ENCODE measurements at regions of chr7 and their contacts with region 1.

Region 1: GRCh38 chr7:43700059-43700501 is 29.2 kb downstream of the COA1 start:
- DNase-seq: peak in 7 of 9 donors; percentile 38 to 73 (median 67)
- ATAC-seq: peak; percentile 89
- H3K4me3 ChIP-seq: no peak overlapping the region
- H3K4me3 Mint-ChIP-seq: peak overlapping the region in 9 of 10 donors; percentile 3 to 75 (median 64)
- H3K27ac ChIP-seq: peak overlapping the region; percentile 32
- H3K27ac Mint-ChIP-seq: peak overlapping the region in 8 of 9 donors; percentile 49 to 81 (median 70)
- H3K4me1 ChIP-seq: peaks cover 12 to 30% of the 10 kb centered on the region in 2 donors
- H3K4me1 Mint-ChIP-seq: peaks cover 23 to 56% (median 44%) of the 10 kb centered on the region in 7 donors
- H3K27me3 ChIP-seq: no peaks in the 10 kb centered on the region
- H3K27me3 Mint-ChIP-seq: no peaks in the 10 kb centered on the region

Region 2: DNA sequence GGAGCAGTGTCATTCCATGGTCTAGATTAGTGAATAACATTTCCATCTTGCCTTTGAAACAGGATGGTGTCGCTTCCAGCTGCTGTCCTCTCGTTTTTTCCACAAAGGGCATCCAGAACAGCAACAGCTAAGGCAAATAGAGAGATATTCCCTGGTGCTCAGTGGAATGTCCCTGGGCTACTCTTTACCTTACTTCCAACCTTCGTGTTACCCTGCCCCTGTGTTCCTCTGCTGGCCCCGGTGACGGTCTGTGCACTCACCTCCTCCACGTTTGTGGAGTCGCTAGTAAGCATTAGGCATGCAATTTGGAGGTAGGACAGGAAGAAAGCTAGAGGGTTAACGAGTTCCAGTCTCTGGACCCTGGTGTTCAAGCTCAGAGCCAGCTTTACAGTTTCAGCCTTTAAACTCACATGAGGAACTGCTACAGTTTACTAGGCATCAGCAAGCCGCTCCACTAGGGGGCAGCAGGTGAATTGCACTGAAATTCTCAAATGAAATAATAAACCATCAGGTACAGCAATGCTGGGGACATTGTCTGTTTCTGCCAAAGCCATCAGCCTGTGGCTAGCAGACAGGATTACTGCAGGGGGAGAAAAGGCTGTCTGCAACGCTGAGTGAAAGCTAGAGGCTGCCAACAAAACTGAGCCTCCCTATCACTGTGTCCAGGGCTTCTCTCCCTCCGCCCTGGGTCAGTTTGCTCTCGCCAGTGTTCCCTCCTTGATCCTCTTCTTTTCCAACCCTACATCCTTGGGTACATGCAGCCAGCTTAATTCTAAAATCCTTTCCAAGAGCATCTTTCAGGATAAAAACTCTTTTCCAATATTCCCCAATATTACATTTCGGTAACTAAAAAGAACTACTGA is 758.9 kb before region 1 on chr7:
- CTCF ChIA-PET with region 1: no interaction called
- POLR2A ChIA-PET with region 1: no interaction called
- intact Hi-C with region 1: loop called in 1 of 2 experiments (anchors 1 kb)
- DNase-seq: peak; percentile 43 to 70 (median 63)
- ATAC-seq: peak; percentile 87
- H3K4me3 ChIP-seq: no peak overlapping the region
- H3K4me3 Mint-ChIP-seq: no peak overlapping the region
- H3K27ac ChIP-seq: no peak overlapping the region
- H3K27ac Mint-ChIP-seq: no peak overlapping the region
- H3K4me1 ChIP-seq: peaks cover 0 to 3% of the 10 kb centered on the region in 2 donors
- H3K4me1 Mint-ChIP-seq: peaks cover 1 to 26% (median 9%) of the 10 kb centered on the region in 7 donors
- H3K27me3 ChIP-seq: no peaks in the 10 kb centered on the region
- H3K27me3 Mint-ChIP-seq: peaks cover 0 to 5% (median 0%) of the 10 kb centered on the region in 5 donors

Region 3: DNA sequence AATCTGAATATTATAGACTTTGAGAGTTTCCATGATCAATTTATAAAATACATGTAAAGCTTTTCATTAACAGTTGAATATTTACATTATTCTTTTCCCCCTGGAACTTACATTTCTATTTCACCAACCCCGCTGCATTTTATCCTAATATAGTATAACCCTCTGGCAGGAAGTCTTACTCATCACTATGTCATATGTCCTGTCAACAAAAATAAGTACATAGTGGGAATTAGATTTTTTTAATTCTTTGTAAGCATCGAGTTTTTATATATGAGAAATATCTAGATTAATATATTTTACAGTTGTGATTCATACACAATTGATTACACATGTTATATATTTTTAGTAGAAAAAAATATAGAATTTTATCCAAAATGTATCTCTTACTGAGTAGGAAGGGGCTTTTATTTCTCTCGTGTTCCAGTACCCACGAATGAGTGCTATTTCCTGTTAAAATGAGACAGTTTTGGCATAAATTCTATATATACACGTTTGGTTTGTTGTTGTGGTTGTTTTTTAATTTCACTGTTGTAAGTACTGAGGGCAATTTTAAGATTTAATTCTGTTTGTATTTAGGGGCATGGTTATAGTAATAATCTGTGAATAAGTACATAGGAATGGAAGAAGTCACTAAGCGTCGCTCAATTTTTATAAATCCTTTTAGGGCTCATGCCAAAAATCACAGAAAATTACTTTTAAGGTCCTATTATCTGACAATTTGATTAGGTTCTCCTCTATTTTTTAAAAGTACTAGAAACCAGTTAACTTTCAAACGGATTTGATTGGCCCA is 500.5 kb before region 1 on chr7:
- CTCF ChIA-PET with region 1: no interaction called
- POLR2A ChIA-PET with region 1: no interaction called
- intact Hi-C with region 1: no loop called
- DNase-seq: no peak
- ATAC-seq: no peak
- H3K4me3 ChIP-seq: no peak overlapping the region
- H3K4me3 Mint-ChIP-seq: no peak overlapping the region
- H3K27ac ChIP-seq: no peak overlapping the region
- H3K27ac Mint-ChIP-seq: no peak overlapping the region
- H3K4me1 ChIP-seq: no peaks in the 10 kb centered on the region
- H3K4me1 Mint-ChIP-seq: no peaks in the 10 kb centered on the region
- H3K27me3 ChIP-seq: no peaks in the 10 kb centered on the region
- H3K27me3 Mint-ChIP-seq: peaks cover 2 to 40% (median 18%) of the 10 kb centered on the region in 5 donors

Region 4: GRCh38 chr7:43590862-43591550 is 109.1 kb before region 1 on chr7:
- CTCF ChIA-PET with region 1: interaction called, 440 read pairs
- POLR2A ChIA-PET with region 1: interaction called, 185 read pairs
- intact Hi-C with region 1: no loop called
- DNase-seq: peak in 1 of 9 donors; percentile 27
- ATAC-seq: no peak
- H3K4me3 ChIP-seq: peak overlapping the region; percentile 33
- H3K4me3 Mint-ChIP-seq: peak overlapping the region; percentile 62 to 92 (median 78)
- H3K27ac ChIP-seq: peak overlapping the region; percentile 67
- H3K27ac Mint-ChIP-seq: peak overlapping the region; percentile 15 to 94 (median 85)
- H3K4me1 ChIP-seq: peaks cover 77 to 78% of the 10 kb centered on the region in 2 donors
- H3K4me1 Mint-ChIP-seq: peaks cover 55 to 91% (median 80%) of the 10 kb centered on the region in 7 donors
- H3K27me3 ChIP-seq: no peaks in the 10 kb centered on the region
- H3K27me3 Mint-ChIP-seq: no peaks in the 10 kb centered on the region

Region 5: DNA sequence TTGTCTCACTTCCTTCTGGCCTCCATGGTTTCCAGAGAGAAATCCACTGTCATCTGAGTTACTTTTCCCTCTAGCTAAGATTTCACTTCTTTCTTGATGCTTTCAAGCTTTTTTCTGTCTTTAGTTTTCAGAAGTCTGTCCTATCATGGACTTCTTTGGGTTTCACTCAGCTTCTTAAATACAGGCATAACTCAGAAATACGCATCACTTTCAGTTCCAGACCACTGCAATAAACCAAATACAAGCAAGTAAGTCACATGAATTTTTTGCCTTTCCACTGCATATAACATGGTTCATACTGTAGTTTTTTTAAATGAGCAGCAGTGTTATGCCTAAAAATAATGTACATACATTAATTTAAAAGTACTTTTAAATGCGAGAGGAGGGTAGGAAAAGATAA is 68.5 kb before region 1 on chr7:
- CTCF ChIA-PET with region 1: interaction called, 35 read pairs
- POLR2A ChIA-PET with region 1: interaction called, 13 read pairs
- intact Hi-C with region 1: no loop called
- DNase-seq: peak in 2 of 9 donors; percentile 36 to 42
- ATAC-seq: peak; percentile 54
- H3K4me3 ChIP-seq: no peak overlapping the region
- H3K4me3 Mint-ChIP-seq: peak overlapping the region; percentile 40 to 78 (median 68)
- H3K27ac ChIP-seq: peak overlapping the region; percentile 53
- H3K27ac Mint-ChIP-seq: peak overlapping the region in 8 of 9 donors; percentile 64 to 100 (median 92)
- H3K4me1 ChIP-seq: peaks cover 44 to 71% of the 10 kb centered on the region in 2 donors
- H3K4me1 Mint-ChIP-seq: peaks cover 49 to 94% (median 76%) of the 10 kb centered on the region in 7 donors
- H3K27me3 ChIP-seq: no peaks in the 10 kb centered on the region
- H3K27me3 Mint-ChIP-seq: no peaks in the 10 kb centered on the region

Region 6: DNA sequence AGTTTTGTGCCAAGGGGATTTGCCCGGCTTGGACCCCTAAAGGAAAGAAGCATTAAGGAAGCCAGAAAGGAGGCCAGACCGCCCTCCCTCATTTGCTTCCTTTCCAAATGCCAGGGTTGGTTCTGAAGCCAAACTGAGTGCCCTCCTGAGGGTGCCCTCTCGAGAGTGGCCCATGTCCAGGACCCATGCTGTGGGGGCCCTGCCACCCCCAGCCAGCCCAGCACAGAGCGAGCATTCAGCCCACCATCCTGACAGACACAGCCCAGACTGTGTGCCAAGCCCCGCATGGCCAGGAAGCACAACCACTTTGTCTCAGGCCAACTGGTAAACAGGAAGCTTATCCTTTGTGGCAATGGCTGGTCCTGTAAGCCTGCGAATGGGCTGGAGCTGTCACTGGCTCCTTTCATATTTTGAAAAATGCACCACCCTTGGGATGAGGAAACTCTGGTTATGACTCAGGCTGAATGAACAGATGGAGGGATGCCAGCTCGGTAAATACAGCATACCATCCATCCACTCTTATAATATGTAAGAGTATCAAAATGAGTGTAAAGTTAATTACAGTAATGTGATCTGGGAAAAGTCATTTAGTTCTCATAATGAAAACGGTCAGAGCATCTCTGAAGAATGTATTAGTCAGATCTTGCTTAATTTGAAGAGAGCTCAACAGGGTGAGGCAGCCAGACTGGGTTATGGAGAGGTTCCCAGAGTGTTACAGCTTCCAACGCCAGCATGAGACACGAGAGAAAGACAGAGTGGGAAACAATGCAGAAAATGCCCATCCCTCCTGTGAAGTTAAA is 52.2 kb before region 1 on chr7:
- CTCF ChIA-PET with region 1: interaction called, 47 read pairs
- POLR2A ChIA-PET with region 1: interaction called, 40 read pairs
- intact Hi-C with region 1: loop called (anchors 1 kb)
- DNase-seq: peak in 3 of 9 donors; percentile 34 to 53 (median 50)
- ATAC-seq: peak; percentile 2
- H3K4me3 ChIP-seq: peak overlapping the region; percentile 22
- H3K4me3 Mint-ChIP-seq: peak overlapping the region; percentile 78 to 91 (median 83)
- H3K27ac ChIP-seq: peak overlapping the region; percentile 80
- H3K27ac Mint-ChIP-seq: peak overlapping the region in 8 of 9 donors; percentile 90 to 100 (median 98)
- H3K4me1 ChIP-seq: peaks cover 88 to 89% of the 10 kb centered on the region in 2 donors
- H3K4me1 Mint-ChIP-seq: peaks cover 78 to 98% (median 95%) of the 10 kb centered on the region in 7 donors
- H3K27me3 ChIP-seq: no peaks in the 10 kb centered on the region
- H3K27me3 Mint-ChIP-seq: no peaks in the 10 kb centered on the region

Region 7: DNA sequence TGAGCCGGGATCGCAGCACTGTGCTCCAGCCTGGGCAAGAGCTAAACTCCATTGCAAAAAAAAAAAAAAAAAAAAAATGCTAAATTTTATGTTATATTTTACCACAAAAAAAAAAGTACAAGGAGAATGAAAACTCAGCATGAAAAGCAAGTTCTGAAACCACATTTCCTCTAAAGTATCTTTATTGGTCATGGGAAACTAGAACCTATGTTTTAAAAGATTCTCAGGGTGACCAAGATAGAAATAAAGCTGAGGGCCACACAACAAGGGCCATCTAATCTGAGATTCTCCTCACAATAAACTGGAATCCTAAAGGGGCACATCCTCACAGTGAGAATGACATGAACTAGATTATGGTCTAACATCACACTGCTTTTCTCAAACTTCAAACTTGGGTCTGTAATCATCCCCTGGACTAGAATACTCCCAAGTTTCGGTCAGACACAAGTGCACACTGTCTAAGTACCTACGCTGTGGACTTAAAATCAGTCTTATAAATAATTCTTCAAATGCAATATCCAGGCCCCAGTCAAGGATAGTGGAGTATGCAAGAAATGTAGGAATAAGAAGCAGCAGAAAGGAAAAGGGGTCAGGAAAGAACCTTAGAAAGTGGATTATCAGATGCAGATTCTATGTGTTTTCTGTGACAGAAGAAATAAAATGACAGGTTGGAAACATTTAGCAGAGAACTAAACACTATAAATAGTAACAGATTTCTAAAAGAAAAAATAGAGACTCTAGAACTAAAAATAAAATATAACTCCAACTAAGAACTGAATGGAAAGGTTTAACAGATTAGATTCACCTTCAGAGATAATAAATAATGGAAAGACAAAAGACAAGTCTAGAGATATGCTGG is 20.6 kb before region 1 on chr7:
- CTCF ChIA-PET with region 1: interaction called, 17 read pairs
- POLR2A ChIA-PET with region 1: interaction called, 4 read pairs
- intact Hi-C with region 1: loop called in 1 of 2 experiments (anchors 2 kb)
- DNase-seq: peak in 3 of 9 donors; percentile 16 to 34 (median 22)
- ATAC-seq: no peak
- H3K4me3 ChIP-seq: no peak overlapping the region
- H3K4me3 Mint-ChIP-seq: peak overlapping the region in 9 of 10 donors; percentile 21 to 72 (median 51)
- H3K27ac ChIP-seq: peak overlapping the region; percentile 21
- H3K27ac Mint-ChIP-seq: peak overlapping the region; percentile 30 to 95 (median 87)
- H3K4me1 ChIP-seq: peaks cover 22 to 24% of the 10 kb centered on the region in 2 donors
- H3K4me1 Mint-ChIP-seq: peaks cover 38 to 92% (median 86%) of the 10 kb centered on the region in 7 donors
- H3K27me3 ChIP-seq: no peaks in the 10 kb centered on the region
- H3K27me3 Mint-ChIP-seq: no peaks in the 10 kb centered on the region

Region 8: DNA sequence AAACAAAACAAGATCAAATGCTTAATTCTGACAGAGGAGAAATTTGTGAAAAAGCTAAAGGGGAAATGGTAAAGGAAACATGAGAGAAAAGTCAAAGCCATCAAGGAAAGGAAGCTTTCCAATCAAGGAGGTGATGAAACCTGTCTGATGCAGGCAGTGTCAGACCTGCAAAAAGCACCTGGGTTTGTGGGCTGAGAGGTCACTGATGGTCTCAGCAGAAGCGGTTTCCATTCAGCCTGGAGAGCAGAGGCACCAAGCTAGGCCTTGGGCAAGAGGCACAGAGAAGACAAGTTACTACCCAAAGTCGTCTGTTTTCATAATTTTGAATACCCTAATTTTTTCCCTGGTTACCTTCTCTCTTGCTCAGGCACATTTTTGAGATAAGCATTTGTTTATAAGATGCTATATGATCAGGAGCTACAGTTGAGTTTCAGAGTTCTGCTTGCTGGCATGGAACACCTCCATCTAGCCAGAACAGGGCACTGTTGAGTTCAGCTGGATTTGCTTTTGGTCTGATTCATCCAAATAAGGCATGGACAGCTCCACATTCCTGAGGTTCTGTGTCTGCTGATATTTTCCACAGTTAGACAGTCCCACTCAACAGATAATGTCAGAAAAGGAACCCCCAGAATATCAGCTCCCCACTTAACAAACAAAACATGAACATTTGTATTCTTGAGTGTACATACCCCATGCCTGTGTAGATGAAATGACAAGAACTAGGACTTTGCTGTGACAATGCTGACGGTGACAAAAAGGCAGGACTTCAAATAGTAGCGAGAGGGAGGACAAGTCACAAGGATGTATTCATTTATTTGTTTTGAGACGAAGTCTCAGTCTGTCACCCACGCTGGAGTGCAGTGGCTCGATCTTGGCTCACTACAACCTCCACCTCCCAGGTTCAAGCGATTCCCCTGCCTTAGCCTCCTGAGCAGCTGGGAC is 1091.5 kb after region 1 on chr7:
- CTCF ChIA-PET with region 1: no interaction called
- POLR2A ChIA-PET with region 1: no interaction called
- intact Hi-C with region 1: no loop called
- DNase-seq: no peak
- ATAC-seq: no peak
- H3K4me3 ChIP-seq: no peak overlapping the region
- H3K4me3 Mint-ChIP-seq: no peak overlapping the region
- H3K27ac ChIP-seq: no peak overlapping the region
- H3K27ac Mint-ChIP-seq: peak overlapping the region in 5 of 9 donors; percentile 4 to 62 (median 9)
- H3K4me1 ChIP-seq: no peaks in the 10 kb centered on the region
- H3K4me1 Mint-ChIP-seq: peaks cover 0 to 12% (median 0%) of the 10 kb centered on the region in 7 donors
- H3K27me3 ChIP-seq: no peaks in the 10 kb centered on the region
- H3K27me3 Mint-ChIP-seq: no peaks in the 10 kb centered on the region

Measured in naive thymus-derived CD4-positive, alpha-beta T cell (primary cell).